ENCODE measurements at regions of chr14 and their contacts with region 1.

Region 1: DNA sequence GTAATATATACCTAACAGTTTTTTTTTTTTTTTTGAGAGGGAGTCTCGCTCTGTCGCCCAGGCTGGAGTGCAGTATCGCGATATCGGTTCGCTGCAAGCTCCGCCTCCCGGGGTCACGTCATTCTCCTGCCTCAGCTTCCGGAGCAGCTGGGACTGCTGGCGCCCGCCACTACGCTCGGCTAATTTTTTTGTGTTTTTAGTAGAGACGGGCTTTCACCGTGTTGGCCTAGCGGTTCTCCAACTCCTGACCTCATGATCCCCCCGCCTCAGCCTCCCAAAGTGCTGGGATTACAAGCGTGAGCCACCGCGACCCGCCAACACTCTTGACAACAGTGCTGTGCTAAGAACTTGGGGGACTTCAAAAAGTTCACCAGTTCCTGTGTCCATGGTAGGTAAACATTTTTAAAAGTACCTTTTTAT is 63.5 kb downstream of the FOXG1 start:
- DNase-seq: no peak

Region 2: DNA sequence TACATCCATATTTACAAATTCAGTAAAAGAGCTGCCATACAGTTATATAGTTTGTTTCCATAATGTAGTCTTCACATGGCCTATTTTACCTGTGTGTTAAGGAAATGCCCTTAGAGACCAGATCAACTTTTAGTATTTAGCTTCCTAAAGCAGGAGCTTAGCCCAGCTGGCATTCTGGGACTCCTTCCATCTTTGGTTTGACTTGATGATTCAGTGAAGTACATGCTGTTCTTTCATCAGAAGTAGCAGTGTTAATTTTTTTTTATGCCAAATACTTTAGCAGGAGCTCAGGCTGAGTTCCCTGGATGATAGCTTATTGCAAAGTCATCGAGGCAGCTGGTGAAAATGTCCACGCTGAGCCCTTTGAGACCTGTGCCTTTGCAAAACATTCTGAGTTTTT is 37.4 kb after region 1 on chr14:
- intact Hi-C with region 1: loop called in 1 of 2 experiments (anchors 1 kb)
- DNase-seq: no peak

Region 3: DNA sequence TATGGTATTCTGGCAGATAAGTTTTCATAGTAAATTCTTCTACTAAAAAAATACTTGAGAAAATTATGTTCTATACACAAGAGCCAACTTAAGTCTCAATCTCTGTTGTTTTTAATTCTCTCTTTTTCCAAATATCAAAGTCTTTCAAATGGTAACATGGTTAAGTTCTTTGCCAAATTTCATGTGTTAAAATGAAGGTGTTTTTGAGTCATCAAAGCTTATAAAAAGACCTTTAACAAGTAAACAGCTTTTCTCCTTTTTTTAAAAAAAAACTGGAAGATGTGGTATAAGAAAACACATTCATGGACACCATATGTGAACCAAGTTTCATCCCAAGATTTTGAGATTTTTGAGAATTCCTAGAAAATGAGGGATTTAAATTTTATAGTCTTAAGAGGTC is 47.8 kb after region 1 on chr14:
- intact Hi-C with region 1: no loop called
- DNase-seq: no peak

Measured in posterior vena cava (tissue), 2 donors.